Colonic mucosa (tissue), 4 donors: ENCODE measurements at regions of chr21 and their contacts with region 1.

Region 1: GRCh38 chr21:17387030-17387617 is 125.7 kb upstream of the CXADR start:
- DNase-seq: peak; percentile 72
- H3K4me3 ChIP-seq: no peak overlapping the region
- H3K27ac ChIP-seq: no peak overlapping the region
- H3K4me1 ChIP-seq: no peaks in the 10 kb centered on the region
- H3K27me3 ChIP-seq: no peaks in the 10 kb centered on the region
- CTCF ChIP-seq: peak; percentile 65

Region 2: GRCh38 chr21:17554679-17555465 is 167.7 kb after region 1 on chr21:
- intact Hi-C with region 1: loop called (anchors 10 kb)
- DNase-seq: no peak
- H3K4me3 ChIP-seq: no peak overlapping the region
- H3K27ac ChIP-seq: no peak overlapping the region
- H3K4me1 ChIP-seq: no peaks in the 10 kb centered on the region
- H3K27me3 ChIP-seq: no peaks in the 10 kb centered on the region
- CTCF ChIP-seq: peak; percentile 28

Region 3: GRCh38 chr21:17580319-17580718 is 193.2 kb after region 1 on chr21:
- intact Hi-C with region 1: loop called (anchors 5 kb)
- DNase-seq: no peak
- H3K4me3 ChIP-seq: no peak overlapping the region
- H3K27ac ChIP-seq: no peak overlapping the region
- H3K4me1 ChIP-seq: no peaks in the 10 kb centered on the region
- H3K27me3 ChIP-seq: no peaks in the 10 kb centered on the region
- CTCF ChIP-seq: no peak